ENCODE measurements at regions of chr2 and their contacts with region 1.

Region 1: GRCh38 chr2:187453078-187453641 is 5.1 kb upstream of the CALCRL start:
- DNase-seq: no peak

Region 2: GRCh38 chr2:186862869-186863709 is 590.1 kb before region 1 on chr2:
- intact Hi-C with region 1: loop called (anchors 1 kb)
- DNase-seq: no peak

Region 3: GRCh38 chr2:186903216-186903615 is 549.9 kb before region 1 on chr2:
- intact Hi-C with region 1: loop called (anchors 5 kb)
- DNase-seq: no peak

Region 4: GRCh38 chr2:187338679-187339121 is 114.5 kb before region 1 on chr2:
- intact Hi-C with region 1: no loop called
- DNase-seq: peak in 4 of 10 donors; percentile 25 to 72 (median 65)

Measured in posterior cingulate gyrus (tissue), 11 donors.